PC-9 (cell line): ENCODE measurements at regions of chr13 and their contacts with region 1.

Region 1: DNA sequence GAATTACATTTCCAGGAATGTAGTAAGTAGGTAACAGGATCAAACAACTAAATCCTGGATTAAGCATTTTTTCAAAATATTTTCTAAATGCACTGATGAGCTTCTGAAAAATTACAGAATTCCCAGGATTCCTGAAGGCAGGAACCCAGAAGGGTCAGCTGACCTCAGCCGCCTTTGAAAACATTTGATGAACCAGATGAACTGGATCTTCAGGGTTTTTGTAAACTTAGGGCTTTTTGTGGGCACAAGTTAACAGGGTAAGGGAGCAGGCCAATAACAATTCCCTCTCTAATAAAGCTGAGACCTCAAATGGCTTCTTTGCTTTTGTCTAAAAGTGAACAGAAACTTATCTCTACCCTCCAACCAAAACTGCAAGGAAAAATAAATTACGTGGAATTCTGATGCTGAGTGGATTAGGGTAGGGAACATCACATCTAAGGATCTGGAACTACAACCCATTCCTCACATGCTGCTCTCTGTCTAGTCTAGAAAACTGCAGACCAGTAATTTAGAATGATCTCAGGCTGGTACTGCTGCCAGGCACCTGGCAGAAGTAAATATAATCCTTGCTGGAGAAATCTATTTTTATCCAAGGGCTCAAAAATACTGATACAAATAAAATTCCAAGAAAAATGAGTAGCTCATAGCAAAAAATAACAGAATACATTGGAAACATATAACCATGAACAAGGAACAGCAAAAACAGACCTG is 48.2 kb upstream of the N4BP2L1 start:
- DNase-seq: no peak
- H3K4me3 ChIP-seq: no peak overlapping the region
- H3K27ac ChIP-seq: no peak overlapping the region
- H3K4me1 ChIP-seq: peaks cover 17% of the 10 kb centered on the region
- H3K27me3 ChIP-seq: no peaks in the 10 kb centered on the region
- CTCF ChIP-seq: no peak

Region 2: GRCh38 chr13:32254416-32254815 is 221.8 kb before region 1 on chr13:
- CTCF ChIA-PET with region 1: interaction called, 21 read pairs
- POLR2A ChIA-PET with region 1: no interaction called
- intact Hi-C with region 1: no loop called
- DNase-seq: no peak
- H3K4me3 ChIP-seq: no peak overlapping the region
- H3K27ac ChIP-seq: no peak overlapping the region
- H3K4me1 ChIP-seq: no peaks in the 10 kb centered on the region
- H3K27me3 ChIP-seq: no peaks in the 10 kb centered on the region
- CTCF ChIP-seq: no peak

Region 3: GRCh38 chr13:32443111-32443510 is 33.1 kb before region 1 on chr13:
- CTCF ChIA-PET with region 1: no interaction called
- POLR2A ChIA-PET with region 1: no interaction called
- intact Hi-C with region 1: no loop called
- DNase-seq: no peak
- H3K4me3 ChIP-seq: no peak overlapping the region
- H3K27ac ChIP-seq: no peak overlapping the region
- H3K4me1 ChIP-seq: no peaks in the 10 kb centered on the region
- H3K27me3 ChIP-seq: no peaks in the 10 kb centered on the region
- CTCF ChIP-seq: peak; percentile 29; the same call in 1 of the 2 replicates

Region 4: DNA sequence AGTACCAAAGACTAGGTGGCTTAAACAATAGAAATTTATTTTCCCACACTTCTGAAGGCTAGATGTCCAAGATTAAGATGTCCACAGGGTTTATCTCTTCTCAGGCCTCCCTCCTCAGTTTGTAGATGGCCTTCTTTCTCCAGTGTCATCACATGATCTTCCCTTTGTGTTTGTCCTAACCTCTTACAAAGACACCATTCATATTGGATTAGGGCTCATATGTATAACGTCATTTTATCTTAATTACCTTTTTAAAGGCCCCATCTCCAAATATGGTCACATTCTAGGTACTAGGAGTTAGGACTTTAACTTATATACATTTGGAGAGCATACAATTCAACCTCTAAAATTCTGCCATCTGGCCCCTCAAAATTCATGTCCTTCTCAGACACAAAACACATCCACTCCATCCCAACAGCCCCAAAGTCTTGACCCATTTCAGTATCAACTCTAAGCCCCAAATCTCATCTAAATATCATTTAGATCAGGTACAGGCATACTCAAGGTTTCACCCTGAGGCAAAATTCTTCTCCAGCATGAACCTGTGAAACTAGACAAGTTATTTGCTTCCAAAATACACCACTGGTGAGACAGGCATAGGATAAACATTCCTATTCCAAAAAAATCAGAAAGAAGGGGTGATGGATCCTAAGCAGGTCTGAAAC is 28.2 kb after region 1 on chr13:
- CTCF ChIA-PET with region 1: no interaction called
- POLR2A ChIA-PET with region 1: no interaction called
- intact Hi-C with region 1: no loop called
- DNase-seq: no peak
- H3K4me3 ChIP-seq: no peak overlapping the region
- H3K27ac ChIP-seq: no peak overlapping the region
- H3K4me1 ChIP-seq: no peaks in the 10 kb centered on the region
- H3K27me3 ChIP-seq: no peaks in the 10 kb centered on the region
- CTCF ChIP-seq: no peak

Region 5: GRCh38 chr13:32515246-32515645 is 39.1 kb after region 1 on chr13:
- CTCF ChIA-PET with region 1: no interaction called
- POLR2A ChIA-PET with region 1: no interaction called
- intact Hi-C with region 1: no loop called
- DNase-seq: no peak
- H3K4me3 ChIP-seq: no peak overlapping the region
- H3K27ac ChIP-seq: no peak overlapping the region
- H3K4me1 ChIP-seq: no peaks in the 10 kb centered on the region
- H3K27me3 ChIP-seq: no peaks in the 10 kb centered on the region
- CTCF ChIP-seq: no peak